ENCODE measurements at regions of chr20 and their contacts with region 1.

Region 1: DNA sequence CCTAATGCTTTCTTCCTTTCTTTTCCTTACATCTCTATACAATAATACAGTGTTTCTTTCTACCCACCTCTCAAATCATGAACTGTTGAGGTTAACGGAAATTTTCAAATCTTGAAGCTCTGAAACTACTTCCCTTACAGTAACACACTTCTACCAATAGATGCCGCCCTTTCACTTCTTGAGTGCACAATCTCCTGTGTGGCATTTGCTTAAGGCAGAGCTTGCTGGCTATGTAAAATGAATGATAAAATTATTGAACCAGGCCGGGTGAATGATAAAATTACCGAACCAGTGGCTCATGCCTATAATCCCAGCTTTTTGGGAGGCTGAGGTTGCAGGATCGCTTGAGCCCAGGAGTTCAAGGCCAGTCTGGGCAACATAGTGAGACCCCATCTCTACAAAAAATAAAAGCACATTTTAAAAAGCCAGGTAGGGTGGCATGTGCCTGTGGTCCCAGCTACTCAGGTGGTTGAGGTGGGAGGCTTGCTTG is 56.8 kb downstream of the KCNS1 start:
- DNase-seq: no peak
- ATAC-seq: peak; percentile 77
- H3K4me3 ChIP-seq: no peak overlapping the region
- H3K27ac ChIP-seq: no peak overlapping the region
- H3K4me1 ChIP-seq: no peaks in the 10 kb centered on the region
- H3K27me3 ChIP-seq: no peaks in the 10 kb centered on the region

Region 2: GRCh38 chr20:45095753-45096371 is 51.7 kb after region 1 on chr20:
- intact Hi-C with region 1: loop called (anchors 5 to 10 kb)
- DNase-seq: no peak
- ATAC-seq: peak; percentile 66
- H3K4me3 ChIP-seq: no peak overlapping the region
- H3K27ac ChIP-seq: no peak overlapping the region
- H3K4me1 ChIP-seq: no peaks in the 10 kb centered on the region
- H3K27me3 ChIP-seq: peaks cover 0 to 3% of the 10 kb centered on the region in 2 donors

Region 3: DNA sequence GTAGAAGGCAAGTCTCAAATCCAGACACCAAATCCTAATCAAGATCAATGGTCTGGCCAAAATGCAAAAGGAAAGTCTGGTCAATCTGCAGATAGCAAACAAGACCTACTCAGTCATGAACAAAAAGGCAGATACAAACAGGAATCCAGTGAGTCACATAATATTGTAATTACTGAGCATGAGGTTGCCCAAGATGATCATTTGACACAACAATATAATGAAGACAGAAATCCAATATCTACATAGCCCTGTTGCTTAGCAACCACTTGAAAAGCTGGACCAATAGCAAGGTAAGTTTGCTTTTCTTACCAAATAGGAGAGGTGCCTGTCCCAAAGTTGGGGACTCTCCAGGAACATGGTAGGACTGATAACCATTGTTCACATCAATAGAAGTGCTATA is 179.0 kb after region 1 on chr20:
- intact Hi-C with region 1: no loop called
- DNase-seq: no peak
- ATAC-seq: no peak
- H3K4me3 ChIP-seq: no peak overlapping the region
- H3K27ac ChIP-seq: no peak overlapping the region
- H3K4me1 ChIP-seq: no peaks in the 10 kb centered on the region
- H3K27me3 ChIP-seq: no peaks in the 10 kb centered on the region

Region 4: GRCh38 chr20:45283548-45284057 is 239.5 kb after region 1 on chr20:
- intact Hi-C with region 1: loop called in 1 of 2 experiments (anchors 10 kb)
- DNase-seq: no peak
- ATAC-seq: no peak
- H3K4me3 ChIP-seq: no peak overlapping the region
- H3K27ac ChIP-seq: no peak overlapping the region
- H3K4me1 ChIP-seq: no peaks in the 10 kb centered on the region
- H3K27me3 ChIP-seq: no peaks in the 10 kb centered on the region

Region 5: GRCh38 chr20:45293041-45294002 is 249.2 kb after region 1 on chr20:
- intact Hi-C with region 1: loop called (anchors 5 to 10 kb)
- DNase-seq: peak; percentile 86 to 97
- ATAC-seq: peak; percentile 83
- H3K4me3 ChIP-seq: peak overlapping the region; percentile 11 to 18
- H3K27ac ChIP-seq: no peak overlapping the region
- H3K4me1 ChIP-seq: no peaks in the 10 kb centered on the region
- H3K27me3 ChIP-seq: no peaks in the 10 kb centered on the region

Measured in aorta (tissue), 5 donors.